SK-N-SH (cell line): ENCODE measurements at regions of chr13 and their contacts with region 1.

Region 1: DNA sequence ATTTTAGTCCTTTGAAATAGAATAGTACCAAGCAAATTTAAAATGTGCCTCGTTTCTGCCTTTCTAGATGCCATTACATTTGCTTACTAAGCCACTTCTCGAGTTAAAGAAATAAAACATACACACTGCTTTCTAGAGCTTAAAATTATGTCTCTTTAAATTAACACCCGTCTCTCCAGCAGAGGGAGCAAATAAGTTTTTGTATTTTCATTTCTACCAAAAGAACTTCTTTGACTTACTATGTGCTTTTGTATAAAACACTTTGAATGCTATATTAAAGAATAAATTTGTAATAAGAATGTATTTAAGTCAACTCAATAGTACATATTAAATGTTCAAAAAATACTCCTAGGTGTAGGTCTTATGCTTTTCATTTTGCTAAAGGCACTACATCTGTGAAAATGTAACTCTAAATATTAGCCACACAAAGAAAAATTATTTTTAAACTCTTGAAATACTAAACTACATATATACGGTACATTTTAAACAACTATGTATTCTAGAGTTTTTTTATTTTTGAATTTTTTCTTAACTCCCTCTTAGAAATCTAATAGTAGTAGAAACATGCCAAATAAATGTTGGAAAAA is 269.3 kb upstream of the MIR17HG start:
- DNase-seq: peak; percentile 27
- H3K4me3 ChIP-seq: no peak overlapping the region
- H3K27ac ChIP-seq: no peak overlapping the region
- H3K4me1 ChIP-seq: no peaks in the 10 kb centered on the region
- H3K27me3 ChIP-seq: no peaks in the 10 kb centered on the region
- CTCF ChIP-seq: peak; percentile 64
- EP300 ChIP-seq: no peak
- RAD21 ChIP-seq: peak; percentile 47

Region 2: DNA sequence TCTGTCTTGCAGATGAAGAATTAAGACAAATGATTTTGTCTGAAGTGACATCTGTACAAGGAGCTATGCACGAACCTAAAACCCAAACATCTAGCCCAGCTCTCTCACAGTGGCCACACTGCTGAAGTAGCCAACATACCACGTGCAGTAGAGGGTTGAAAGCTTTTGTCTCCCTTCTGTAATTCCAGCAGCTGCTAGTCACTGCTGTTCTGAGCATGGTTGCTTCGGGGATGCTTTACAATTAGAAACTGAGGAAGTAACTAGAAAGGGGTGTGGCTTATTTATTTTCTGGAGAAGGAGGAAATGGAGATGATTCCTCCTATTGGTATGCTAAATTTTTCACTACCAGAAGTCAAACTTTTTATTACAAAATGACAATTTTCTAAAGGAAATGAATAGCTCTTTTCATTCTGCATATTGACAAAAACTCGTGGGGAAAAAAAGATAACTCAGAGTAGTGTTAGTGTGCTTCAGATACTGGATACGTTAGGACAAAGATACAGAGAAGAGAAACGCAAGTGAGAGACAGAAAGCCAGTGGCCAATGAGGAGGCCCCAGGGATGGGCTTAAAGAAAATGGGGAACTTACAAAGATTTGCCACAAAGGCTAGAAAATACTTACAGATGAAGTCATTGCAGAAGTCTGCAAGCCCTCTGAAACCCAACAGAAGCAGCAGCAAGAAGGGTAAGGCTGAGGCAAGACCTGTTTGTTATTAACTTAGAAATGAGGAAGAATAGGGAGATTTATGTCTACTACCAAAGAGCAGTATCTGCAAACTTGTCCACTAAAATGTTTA is 76.6 kb after region 1 on chr13:
- CTCF ChIA-PET with region 1: interaction called, 12 read pairs
- POLR2A ChIA-PET with region 1: no interaction called
- DNase-seq: no peak
- H3K4me3 ChIP-seq: no peak overlapping the region
- H3K27ac ChIP-seq: peak overlapping the region in 1 of 2 experiments; percentile 91; a peak in 2 of 4 replicates
- H3K4me1 ChIP-seq: peaks cover 0 to 23% of the 10 kb centered on the region in 2 experiments; a peak in 2 of 4 replicates
- H3K27me3 ChIP-seq: no peaks in the 10 kb centered on the region
- CTCF ChIP-seq: no peak
- EP300 ChIP-seq: no peak
- RAD21 ChIP-seq: no peak